CD8-positive, alpha-beta T cell (primary cell): ENCODE measurements at regions of chr14 and their contacts with region 1.

Region 1: DNA sequence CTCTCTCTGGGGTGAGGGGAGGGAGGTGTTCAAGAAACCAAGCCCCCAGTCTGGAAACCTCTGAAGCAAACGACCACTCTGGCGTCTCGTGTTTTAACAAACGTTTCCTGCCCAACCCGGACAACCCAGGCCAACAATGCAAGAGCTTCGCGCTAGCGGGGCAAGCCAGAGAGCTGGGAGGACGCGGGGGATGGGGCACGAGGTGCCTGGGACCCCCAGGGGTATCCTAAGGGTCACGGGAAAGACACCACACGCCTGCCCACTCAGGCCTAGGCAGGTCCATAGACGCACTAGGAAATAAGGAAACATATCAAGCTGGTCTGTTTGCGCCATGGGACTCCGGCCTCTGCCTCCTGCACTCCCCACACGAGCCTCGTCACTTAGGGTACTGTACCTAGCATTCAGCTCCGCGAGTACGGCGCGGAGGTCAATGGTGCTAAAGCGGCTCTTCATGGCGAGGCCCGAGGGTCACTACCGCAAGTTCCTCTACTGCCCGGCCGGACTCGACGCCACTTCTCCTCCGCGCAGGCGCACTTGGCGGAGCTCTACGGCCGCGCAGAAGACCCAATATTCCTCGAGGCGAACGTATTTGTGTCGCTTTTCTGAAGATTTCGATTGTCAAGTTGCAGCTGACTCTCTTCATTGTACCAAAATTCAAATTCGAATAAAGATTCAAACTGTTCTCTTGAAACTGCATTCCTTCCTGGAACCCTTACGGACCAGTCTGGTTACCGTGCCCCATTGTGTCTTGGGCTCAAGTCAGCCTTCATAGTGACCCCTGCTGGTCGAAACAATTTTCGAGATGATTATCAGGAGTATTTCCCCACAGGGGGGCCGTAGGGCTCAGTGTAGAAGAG is at the start of gene NEMF:
- DNase-seq: peak; percentile 56 to 92 (median 79)
- ATAC-seq: peak; percentile 78
- H3K4me3 ChIP-seq: peak within 1 kb of the TSS; percentile 75 to 88
- H3K4me3 Mint-ChIP-seq: peak within 1 kb of the TSS; percentile 100
- H3K27ac ChIP-seq: peak within 1 kb of the TSS; percentile 68 to 82
- H3K27ac Mint-ChIP-seq: peak within 1 kb of the TSS; percentile 99
- H3K4me1 ChIP-seq: peaks cover 29% of the 10 kb centered on the region
- H3K4me1 Mint-ChIP-seq: peaks cover 42% of the 10 kb centered on the region
- H3K27me3 ChIP-seq: no peaks in the 10 kb centered on the region
- H3K27me3 Mint-ChIP-seq: no peaks in the 10 kb centered on the region
- CTCF ChIP-seq: peak; percentile 69
- total RNA-seq, gene NEMF: 101 to 106 TPM

Region 2: GRCh38 chr14:49585803-49586672 is 266.5 kb before region 1 on chr14 and contains the start of gene RPS29:
- CTCF ChIA-PET with region 1: no interaction called
- POLR2A ChIA-PET with region 1: interaction called, 3 read pairs
- intact Hi-C with region 1: loop called in 1 of 2 experiments (anchors 1 kb)
- DNase-seq: peak; percentile 97 to 100 (median 98)
- ATAC-seq: peak; percentile 82
- H3K4me3 ChIP-seq: peak within 1 kb of the TSS; percentile 81 to 98
- H3K4me3 Mint-ChIP-seq: peak within 1 kb of the TSS; percentile 91
- H3K27ac ChIP-seq: peak within 1 kb of the TSS; percentile 97 to 98
- H3K27ac Mint-ChIP-seq: peak within 1 kb of the TSS; percentile 98
- H3K4me1 ChIP-seq: peaks cover 33% of the 10 kb centered on the region
- H3K4me1 Mint-ChIP-seq: peaks cover 48% of the 10 kb centered on the region
- H3K27me3 ChIP-seq: no peaks in the 10 kb centered on the region
- H3K27me3 Mint-ChIP-seq: no peaks in the 10 kb centered on the region
- CTCF ChIP-seq: no peak
- total RNA-seq, gene RPS29: 3,843 to 3,876 TPM

Region 3: DNA sequence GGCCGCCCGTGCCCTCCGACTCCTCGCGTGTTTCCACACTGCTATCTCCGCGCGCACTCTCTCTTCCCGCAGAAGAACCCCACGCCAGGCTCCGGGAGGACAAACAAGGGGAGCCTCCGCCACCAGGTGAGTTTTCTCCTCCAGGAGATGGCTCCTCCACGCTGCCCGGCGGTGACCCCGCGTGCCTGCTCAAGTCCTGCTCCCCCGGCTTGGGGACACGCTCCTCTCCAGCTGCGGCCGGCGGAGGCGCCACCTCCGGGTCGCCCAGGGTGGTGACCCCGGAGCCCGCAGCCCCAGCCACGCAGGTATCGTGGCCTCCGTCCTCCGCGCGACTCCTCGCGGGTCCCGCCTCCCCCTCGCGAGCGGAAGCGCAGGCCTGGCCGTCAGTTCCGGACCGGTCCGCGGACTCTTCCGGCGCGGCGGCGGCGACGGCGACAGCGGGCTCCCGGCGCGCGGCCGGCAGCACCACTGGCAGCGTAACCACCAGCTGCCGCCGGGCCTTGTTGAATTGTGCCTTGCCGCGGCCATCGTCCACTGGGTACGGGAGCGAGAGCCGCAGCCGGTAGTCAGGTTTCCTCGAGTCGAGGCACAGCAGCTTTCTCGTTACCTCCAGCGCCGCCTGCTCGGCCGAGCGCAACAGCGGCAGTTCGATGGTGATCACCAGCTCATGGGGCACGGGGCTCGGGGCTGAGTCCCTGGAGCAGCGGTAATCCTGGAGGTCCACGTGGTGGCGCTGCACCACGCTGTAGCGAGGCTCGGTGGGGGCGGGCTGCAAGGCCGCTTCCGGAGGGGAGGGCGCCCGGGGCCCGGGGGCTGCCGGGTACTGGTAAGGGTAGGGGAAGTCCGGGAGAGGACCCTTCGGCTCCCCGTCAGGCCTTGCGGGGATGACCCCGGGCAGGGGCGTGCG is 218.6 kb before region 1 on chr14:
- CTCF ChIA-PET with region 1: interaction called, 14 read pairs
- POLR2A ChIA-PET with region 1: interaction called, 7 read pairs
- intact Hi-C with region 1: loop called in 1 of 2 experiments (anchors 2 kb)
- DNase-seq: peak; percentile 88 to 97 (median 94)
- ATAC-seq: peak; percentile 84
- H3K4me3 ChIP-seq: peak overlapping the region; percentile 74 to 92
- H3K4me3 Mint-ChIP-seq: peak overlapping the region; percentile 92
- H3K27ac ChIP-seq: peak overlapping the region; percentile 95
- H3K27ac Mint-ChIP-seq: peak overlapping the region; percentile 93
- H3K4me1 ChIP-seq: peaks cover 27% of the 10 kb centered on the region
- H3K4me1 Mint-ChIP-seq: peaks cover 62% of the 10 kb centered on the region
- H3K27me3 ChIP-seq: no peaks in the 10 kb centered on the region
- H3K27me3 Mint-ChIP-seq: no peaks in the 10 kb centered on the region
- CTCF ChIP-seq: peak; percentile 72

Region 4: GRCh38 chr14:49659526-49660455 is 192.7 kb before region 1 on chr14:
- CTCF ChIA-PET with region 1: no interaction called
- POLR2A ChIA-PET with region 1: no interaction called
- intact Hi-C with region 1: no loop called
- DNase-seq: no peak
- ATAC-seq: no peak
- H3K4me3 ChIP-seq: no peak overlapping the region
- H3K4me3 Mint-ChIP-seq: no peak overlapping the region
- H3K27ac ChIP-seq: no peak overlapping the region
- H3K27ac Mint-ChIP-seq: no peak overlapping the region
- H3K4me1 ChIP-seq: no peaks in the 10 kb centered on the region
- H3K4me1 Mint-ChIP-seq: peaks cover 1% of the 10 kb centered on the region
- H3K27me3 ChIP-seq: no peaks in the 10 kb centered on the region
- H3K27me3 Mint-ChIP-seq: no peaks in the 10 kb centered on the region
- CTCF ChIP-seq: no peak

Region 5: GRCh38 chr14:49767562-49768300 is 84.8 kb before region 1 on chr14 and contains the start of gene KLHDC2:
- CTCF ChIA-PET with region 1: interaction called, 3 read pairs
- POLR2A ChIA-PET with region 1: interaction called, 30 read pairs
- intact Hi-C with region 1: loop called in 1 of 2 experiments (anchors 2 kb)
- DNase-seq: peak; percentile 74 to 94 (median 87)
- ATAC-seq: peak; percentile 65
- H3K4me3 ChIP-seq: peak within 1 kb of the TSS; percentile 79 to 99
- H3K4me3 Mint-ChIP-seq: peak within 1 kb of the TSS; percentile 98
- H3K27ac ChIP-seq: peak within 1 kb of the TSS; percentile 94 to 97
- H3K27ac Mint-ChIP-seq: peak within 1 kb of the TSS; percentile 100
- H3K4me1 ChIP-seq: peaks cover 29% of the 10 kb centered on the region
- H3K4me1 Mint-ChIP-seq: peaks cover 38% of the 10 kb centered on the region
- H3K27me3 ChIP-seq: no peaks in the 10 kb centered on the region
- H3K27me3 Mint-ChIP-seq: no peaks in the 10 kb centered on the region
- CTCF ChIP-seq: peak; percentile 22
- total RNA-seq, gene KLHDC2: 121 to 122 TPM

Region 6: GRCh38 chr14:50099335-50099734 is 246.8 kb after region 1 on chr14:
- CTCF ChIA-PET with region 1: interaction called, 14 read pairs
- POLR2A ChIA-PET with region 1: interaction called, 5 read pairs
- intact Hi-C with region 1: loop called (anchors 1 to 2 kb)
- DNase-seq: no peak
- ATAC-seq: no peak
- H3K4me3 ChIP-seq: no peak overlapping the region
- H3K4me3 Mint-ChIP-seq: no peak overlapping the region
- H3K27ac ChIP-seq: no peak overlapping the region
- H3K27ac Mint-ChIP-seq: peak overlapping the region; percentile 69
- H3K4me1 ChIP-seq: peaks cover 73% of the 10 kb centered on the region
- H3K4me1 Mint-ChIP-seq: peaks cover 71% of the 10 kb centered on the region
- H3K27me3 ChIP-seq: no peaks in the 10 kb centered on the region
- H3K27me3 Mint-ChIP-seq: no peaks in the 10 kb centered on the region
- CTCF ChIP-seq: no peak

Region 7: GRCh38 chr14:50116181-50116956 is 263.8 kb after region 1 on chr14 and contains the start of gene VCPKMT:
- CTCF ChIA-PET with region 1: interaction called, 12 read pairs
- POLR2A ChIA-PET with region 1: interaction called, 7 read pairs
- intact Hi-C with region 1: loop called in 1 of 2 experiments (anchors 2 kb)
- DNase-seq: peak; percentile 91 to 98 (median 96)
- ATAC-seq: peak; percentile 97
- H3K4me3 ChIP-seq: peak within 1 kb of the TSS; percentile 69 to 92
- H3K4me3 Mint-ChIP-seq: peak within 1 kb of the TSS; percentile 98
- H3K27ac ChIP-seq: peak within 1 kb of the TSS; percentile 85 to 86
- H3K27ac Mint-ChIP-seq: peak within 1 kb of the TSS; percentile 99
- H3K4me1 ChIP-seq: peaks cover 20% of the 10 kb centered on the region
- H3K4me1 Mint-ChIP-seq: peaks cover 28% of the 10 kb centered on the region
- H3K27me3 ChIP-seq: no peaks in the 10 kb centered on the region
- H3K27me3 Mint-ChIP-seq: no peaks in the 10 kb centered on the region
- CTCF ChIP-seq: no peak
- total RNA-seq, gene VCPKMT: 38.2 to 39.6 TPM

Region 8: GRCh38 chr14:50532502-50533240 is 680.1 kb after region 1 on chr14 and contains the start of gene MAP4K5:
- CTCF ChIA-PET with region 1: no interaction called
- POLR2A ChIA-PET with region 1: no interaction called
- intact Hi-C with region 1: loop called in 1 of 2 experiments (anchors 5 kb)
- DNase-seq: peak; percentile 73 to 95 (median 88)
- ATAC-seq: peak; percentile 93
- H3K4me3 ChIP-seq: peak within 1 kb of the TSS; percentile 45 to 88
- H3K4me3 Mint-ChIP-seq: peak within 1 kb of the TSS; percentile 89
- H3K27ac ChIP-seq: peak within 1 kb of the TSS; percentile 47 to 70
- H3K27ac Mint-ChIP-seq: peak within 1 kb of the TSS; percentile 92
- H3K4me1 ChIP-seq: peaks cover 42% of the 10 kb centered on the region
- H3K4me1 Mint-ChIP-seq: peaks cover 49% of the 10 kb centered on the region
- H3K27me3 ChIP-seq: no peaks in the 10 kb centered on the region
- H3K27me3 Mint-ChIP-seq: no peaks in the 10 kb centered on the region
- CTCF ChIP-seq: peak; percentile 69
- total RNA-seq, gene MAP4K5: 32.0 to 32.7 TPM